Activated CD4-positive, alpha-beta memory T cell treated with anti-CD3 and anti-CD28 coated beads, Interleukin-2, amount 10 ng/mL, durations not matched to agents 7 days and 5 days (primary cell): ENCODE measurements at regions of chr1 and their contacts with region 1.

Region 1: DNA sequence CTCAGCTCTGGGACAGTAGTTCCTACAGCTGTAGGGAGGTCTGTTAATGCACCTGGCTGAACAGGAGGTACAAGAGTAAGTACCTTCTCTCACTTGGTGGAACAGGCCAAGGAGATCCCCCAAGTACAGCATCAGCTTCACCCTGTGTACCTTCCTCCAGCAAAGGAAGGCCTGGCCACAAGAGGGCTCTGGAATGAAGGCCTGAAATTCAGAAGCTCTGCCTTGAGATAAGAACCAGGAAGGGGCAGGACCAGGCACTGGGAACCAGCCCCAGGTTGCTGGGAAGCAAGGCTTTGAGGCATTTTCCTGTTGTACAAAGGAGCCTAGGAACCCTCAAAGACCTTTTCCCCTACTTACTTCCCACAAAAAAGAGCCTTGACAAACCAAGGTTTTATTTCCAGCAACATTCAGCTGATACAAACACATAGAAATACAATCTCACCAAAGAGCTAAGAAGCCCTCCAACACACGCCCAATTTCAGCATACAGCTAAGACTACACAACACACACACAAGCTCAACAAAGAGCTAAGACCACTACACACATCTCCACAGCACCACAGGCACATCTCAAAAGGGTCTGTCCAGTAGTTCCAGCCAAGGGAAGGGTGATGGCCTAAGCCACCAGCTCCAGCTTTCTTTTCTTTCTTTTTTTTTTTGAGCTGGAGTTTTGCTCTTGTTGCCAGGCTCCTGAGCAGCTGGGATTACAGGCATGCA is 23.5 kb downstream of the F11R start:
- DNase-seq: peak; percentile 59
- H3K4me3 Mint-ChIP-seq: no peak overlapping the region
- H3K27ac Mint-ChIP-seq: no peak overlapping the region
- H3K4me1 Mint-ChIP-seq: peaks cover 9% of the 10 kb centered on the region
- H3K27me3 Mint-ChIP-seq: no peaks in the 10 kb centered on the region

Region 2: DNA sequence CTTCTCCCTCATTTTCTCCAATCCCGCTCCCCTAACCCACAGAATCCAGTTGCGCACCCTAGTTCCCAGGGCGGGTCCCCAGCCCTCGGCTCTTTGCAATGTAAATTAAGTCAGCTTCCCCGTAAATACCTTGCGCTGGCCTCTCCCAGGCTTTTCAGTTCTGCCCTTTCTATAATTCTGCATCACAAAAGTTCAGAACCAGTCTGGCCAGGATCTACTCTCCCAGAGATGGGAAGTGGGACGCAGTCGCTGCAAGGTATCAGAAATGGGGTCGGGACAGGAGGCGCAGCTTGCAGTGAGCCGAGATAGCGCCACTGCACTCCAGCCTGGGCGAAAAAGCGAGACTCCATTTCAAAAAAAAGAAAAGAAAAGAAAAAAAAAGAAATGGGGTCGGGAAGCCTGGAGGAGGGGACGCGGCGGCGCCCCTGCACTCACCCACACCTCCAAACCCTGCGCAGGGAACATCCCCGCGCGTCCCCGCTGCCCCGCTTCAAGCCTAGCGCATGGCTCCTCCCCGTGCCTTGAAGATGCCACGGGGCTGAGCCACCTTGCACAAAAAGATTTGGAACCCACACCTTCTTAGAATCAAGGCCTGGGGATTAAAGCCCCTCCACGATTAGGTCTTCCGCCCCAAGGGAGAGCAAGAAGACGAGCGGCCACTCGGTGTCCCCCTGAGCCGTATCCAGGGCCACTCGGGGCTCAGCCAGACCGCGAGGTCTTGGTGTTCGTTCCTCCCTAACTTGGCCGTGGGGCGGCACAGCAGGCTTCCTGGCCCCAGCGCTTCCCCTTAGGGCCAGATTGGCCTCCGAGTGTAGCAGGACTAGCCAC is 15.7 kb before region 1 on chr1:
- CTCF ChIA-PET with region 1: no interaction called
- POLR2A ChIA-PET with region 1: no interaction called
- DNase-seq: no peak
- H3K4me3 Mint-ChIP-seq: peak overlapping the region; percentile 53
- H3K27ac Mint-ChIP-seq: no peak overlapping the region
- H3K4me1 Mint-ChIP-seq: peaks cover 9% of the 10 kb centered on the region
- H3K27me3 Mint-ChIP-seq: peaks cover 33% of the 10 kb centered on the region

Region 3: GRCh38 chr1:161013488-161014230 is 16.2 kb after region 1 on chr1:
- CTCF ChIA-PET with region 1: interaction called, 12 read pairs
- POLR2A ChIA-PET with region 1: no interaction called
- DNase-seq: peak; percentile 75
- H3K4me3 Mint-ChIP-seq: peak overlapping the region; percentile 66
- H3K27ac Mint-ChIP-seq: peak overlapping the region; percentile 94
- H3K4me1 Mint-ChIP-seq: peaks cover 35% of the 10 kb centered on the region
- H3K27me3 Mint-ChIP-seq: no peaks in the 10 kb centered on the region

Region 4: GRCh38 chr1:161021165-161021960 is 23.9 kb after region 1 on chr1:
- CTCF ChIA-PET with region 1: interaction called, 15 read pairs
- POLR2A ChIA-PET with region 1: interaction called, 4 read pairs
- DNase-seq: peak; percentile 86
- H3K4me3 Mint-ChIP-seq: peak overlapping the region; percentile 85
- H3K27ac Mint-ChIP-seq: peak overlapping the region; percentile 65
- H3K4me1 Mint-ChIP-seq: peaks cover 31% of the 10 kb centered on the region
- H3K27me3 Mint-ChIP-seq: peaks cover 4% of the 10 kb centered on the region